ENCODE measurements at regions of chr6 and their contacts with region 1.

Region 1: GRCh38 chr6:30828027-30828960 is 56.0 kb upstream of the DDR1 start:
- DNase-seq: peak; percentile 86 to 94 (median 92)
- H3K4me3 ChIP-seq: no peak overlapping the region
- H3K27ac ChIP-seq: peak overlapping the region in 1 of 2 donors; percentile 56
- H3K4me1 ChIP-seq: peaks cover 3% of the 10 kb centered on the region
- H3K27me3 ChIP-seq: no peaks in the 10 kb centered on the region
- CTCF ChIP-seq: peak; percentile 80 to 97 (median 90)
- EP300 ChIP-seq: no peak
- POLR2A ChIP-seq: no peak

Region 2: GRCh38 chr6:30672445-30673253 is 155.6 kb before region 1 on chr6 and contains the start of gene DHX16:
- intact Hi-C with region 1: loop called in 2 of 4 experiments (anchors 5 to 10 kb)
- DNase-seq: peak; percentile 94 to 97 (median 96)
- H3K4me3 ChIP-seq: peak within 1 kb of the TSS; percentile 100
- H3K27ac ChIP-seq: peak within 1 kb of the TSS in 1 of 2 donors; percentile 35
- H3K4me1 ChIP-seq: peaks cover 4% of the 10 kb centered on the region
- H3K27me3 ChIP-seq: no peaks in the 10 kb centered on the region
- CTCF ChIP-seq: peak; percentile 85 to 89 (median 88)
- EP300 ChIP-seq: no peak
- POLR2A ChIP-seq: peak; percentile 18
- total RNA-seq, gene DHX16: 18.0 to 27.4 (median 22.5) TPM

Region 3: GRCh38 chr6:30678964-30679726 is 149.1 kb before region 1 on chr6:
- intact Hi-C with region 1: loop called in 2 of 4 experiments (anchors 5 to 10 kb)
- DNase-seq: peak; percentile 79 to 92 (median 90)
- H3K4me3 ChIP-seq: no peak overlapping the region
- H3K27ac ChIP-seq: peak overlapping the region in 1 of 2 donors; percentile 2
- H3K4me1 ChIP-seq: peaks cover 10% of the 10 kb centered on the region
- H3K27me3 ChIP-seq: no peaks in the 10 kb centered on the region
- CTCF ChIP-seq: peak; percentile 89 to 96 (median 96)
- EP300 ChIP-seq: no peak
- POLR2A ChIP-seq: no peak

Region 4: GRCh38 chr6:30730601-30731435 is 97.5 kb before region 1 on chr6:
- intact Hi-C with region 1: no loop called
- DNase-seq: peak in 4 of 5 donors; percentile 60 to 72 (median 64)
- H3K4me3 ChIP-seq: no peak overlapping the region
- H3K27ac ChIP-seq: no peak overlapping the region
- H3K4me1 ChIP-seq: no peaks in the 10 kb centered on the region
- H3K27me3 ChIP-seq: no peaks in the 10 kb centered on the region
- CTCF ChIP-seq: peak in 2 of 3 donors; percentile 17 to 35
- EP300 ChIP-seq: no peak
- POLR2A ChIP-seq: no peak

Region 5: GRCh38 chr6:30845183-30845582 is 16.9 kb after region 1 on chr6:
- intact Hi-C with region 1: no loop called
- DNase-seq: no peak
- H3K4me3 ChIP-seq: no peak overlapping the region
- H3K27ac ChIP-seq: no peak overlapping the region
- H3K4me1 ChIP-seq: peaks cover 17% of the 10 kb centered on the region
- H3K27me3 ChIP-seq: no peaks in the 10 kb centered on the region
- CTCF ChIP-seq: no peak
- EP300 ChIP-seq: no peak
- POLR2A ChIP-seq: no peak

Region 6: DNA sequence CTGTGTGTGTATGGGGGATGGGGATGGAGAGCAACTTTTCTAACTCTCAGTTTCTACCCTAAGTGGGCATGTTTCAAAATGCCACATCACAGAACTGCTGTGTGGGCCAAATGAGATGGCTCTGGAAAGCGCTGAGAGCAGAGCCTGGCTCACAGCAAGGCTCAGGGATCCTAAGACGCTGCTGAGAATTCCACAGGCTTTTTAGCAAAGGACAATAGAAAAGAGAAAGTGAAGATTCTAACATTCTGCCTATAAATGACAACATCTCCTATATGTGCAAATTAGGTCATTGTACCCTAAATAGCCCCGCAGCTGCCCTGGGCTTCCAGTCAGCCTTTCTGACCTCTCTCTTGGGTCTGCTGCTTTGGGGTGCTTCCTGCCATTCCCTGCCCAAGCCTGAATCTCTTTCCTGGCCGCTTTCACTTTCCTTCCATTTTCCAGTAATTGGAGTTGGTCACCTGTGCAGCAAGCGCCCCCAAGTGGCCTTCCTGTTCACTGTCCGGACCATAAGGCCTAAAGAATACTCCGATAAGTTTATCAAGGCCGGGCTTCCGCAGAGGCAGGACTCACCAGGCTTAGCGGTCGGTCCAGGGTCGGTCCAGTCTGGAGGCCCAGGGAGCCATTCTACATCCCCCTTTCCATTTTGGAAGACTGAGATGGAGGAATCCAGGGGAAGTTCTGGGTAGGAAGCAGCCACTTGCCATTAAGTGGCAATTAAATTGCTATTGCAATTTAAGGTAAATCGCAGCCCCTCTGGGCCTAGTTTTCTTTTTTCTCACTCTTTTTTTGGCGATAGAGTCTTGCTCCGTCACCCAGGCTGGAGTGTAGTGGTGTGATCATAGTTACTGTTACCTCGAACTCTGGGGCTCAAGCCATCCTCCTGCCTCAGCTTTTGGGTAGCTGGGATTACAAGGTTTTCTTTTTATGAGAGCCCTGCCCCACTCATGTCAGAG is 49.4 kb after region 1 on chr6:
- intact Hi-C with region 1: loop called (anchors 2 kb)
- DNase-seq: peak; percentile 88 to 94 (median 92)
- H3K4me3 ChIP-seq: peak overlapping the region; percentile 30
- H3K27ac ChIP-seq: peak overlapping the region; percentile 39 to 72
- H3K4me1 ChIP-seq: peaks cover 8% of the 10 kb centered on the region
- H3K27me3 ChIP-seq: no peaks in the 10 kb centered on the region
- CTCF ChIP-seq: peak; percentile 83 to 93 (median 92)
- EP300 ChIP-seq: no peak
- POLR2A ChIP-seq: no peak

Region 7: DNA sequence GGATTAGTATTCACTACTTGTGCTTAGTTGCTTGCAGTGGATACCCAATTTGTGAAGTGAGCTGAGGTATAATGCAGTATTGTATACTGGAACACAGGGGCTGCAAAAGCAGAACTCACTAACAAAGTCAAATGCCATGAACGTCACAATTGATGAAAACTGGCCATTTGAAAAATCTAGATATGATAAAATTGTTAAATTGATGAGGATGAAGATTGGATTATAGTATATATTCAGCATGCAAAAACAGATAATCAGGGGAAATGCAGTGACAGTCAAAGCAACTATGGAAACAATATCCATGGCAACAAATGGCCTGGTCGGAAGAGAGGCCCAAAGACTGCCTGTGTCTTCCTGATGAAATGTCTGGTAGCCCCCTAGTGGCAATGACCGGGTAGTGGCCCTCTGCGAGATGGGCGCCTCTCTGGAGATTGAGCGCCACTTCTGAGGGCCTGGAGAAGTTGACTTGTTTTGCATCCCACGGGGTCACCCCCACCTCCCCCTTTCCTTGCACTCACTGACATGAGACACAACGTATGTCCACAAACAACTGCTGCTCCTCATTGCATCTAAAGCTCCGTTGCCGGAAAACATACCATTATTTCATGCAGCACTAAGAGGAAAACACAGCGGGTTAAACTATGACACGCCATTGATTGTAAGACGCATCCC is 240.5 kb after region 1 on chr6:
- intact Hi-C with region 1: loop called in 3 of 4 experiments (anchors 5 to 10 kb)
- DNase-seq: peak; percentile 52 to 72 (median 65)
- H3K4me3 ChIP-seq: no peak overlapping the region
- H3K27ac ChIP-seq: no peak overlapping the region
- H3K4me1 ChIP-seq: no peaks in the 10 kb centered on the region
- H3K27me3 ChIP-seq: no peaks in the 10 kb centered on the region
- CTCF ChIP-seq: peak; percentile 15 to 52 (median 41)
- EP300 ChIP-seq: no peak
- POLR2A ChIP-seq: no peak

Region 8: DNA sequence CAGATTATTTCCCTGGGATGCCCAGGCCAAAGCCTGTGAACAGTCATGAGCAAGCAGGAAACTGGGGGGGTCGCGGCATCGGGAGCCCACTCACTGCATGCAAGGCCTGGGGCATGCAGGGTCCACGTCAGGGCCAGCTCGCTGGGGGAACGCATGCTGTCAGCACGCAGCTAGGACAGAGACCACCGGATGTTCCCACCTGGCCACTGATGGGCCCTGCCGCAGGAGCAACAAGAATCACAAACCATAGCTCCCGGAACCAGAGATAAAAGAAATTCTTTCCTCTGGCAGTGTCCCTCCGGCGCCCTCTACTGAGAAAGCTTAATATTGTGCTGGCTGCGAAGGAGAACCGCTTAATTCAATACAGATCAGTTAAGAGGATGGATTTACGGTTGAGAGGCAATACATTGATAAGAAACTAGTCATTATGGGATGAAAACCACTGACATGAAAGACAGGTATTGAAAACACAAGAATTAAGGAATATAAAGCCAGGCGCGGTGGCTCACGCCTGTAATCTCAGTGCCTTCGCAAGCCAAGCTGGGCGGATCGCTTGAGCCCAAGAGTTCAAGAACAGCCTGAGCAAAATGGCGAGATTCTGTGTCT is 251.5 kb after region 1 on chr6:
- intact Hi-C with region 1: loop called in 3 of 4 experiments (anchors 5 to 10 kb)
- DNase-seq: peak; percentile 52 to 75 (median 67)
- H3K4me3 ChIP-seq: no peak overlapping the region
- H3K27ac ChIP-seq: no peak overlapping the region
- H3K4me1 ChIP-seq: peaks cover 3% of the 10 kb centered on the region
- H3K27me3 ChIP-seq: no peaks in the 10 kb centered on the region
- CTCF ChIP-seq: peak; percentile 68 to 79 (median 71)
- EP300 ChIP-seq: no peak
- POLR2A ChIP-seq: no peak

Measured in ovary (tissue), 10 donors.